Ovary (tissue), 10 donors: ENCODE measurements at regions of chr10 and their contacts with region 1.

Region 1: DNA sequence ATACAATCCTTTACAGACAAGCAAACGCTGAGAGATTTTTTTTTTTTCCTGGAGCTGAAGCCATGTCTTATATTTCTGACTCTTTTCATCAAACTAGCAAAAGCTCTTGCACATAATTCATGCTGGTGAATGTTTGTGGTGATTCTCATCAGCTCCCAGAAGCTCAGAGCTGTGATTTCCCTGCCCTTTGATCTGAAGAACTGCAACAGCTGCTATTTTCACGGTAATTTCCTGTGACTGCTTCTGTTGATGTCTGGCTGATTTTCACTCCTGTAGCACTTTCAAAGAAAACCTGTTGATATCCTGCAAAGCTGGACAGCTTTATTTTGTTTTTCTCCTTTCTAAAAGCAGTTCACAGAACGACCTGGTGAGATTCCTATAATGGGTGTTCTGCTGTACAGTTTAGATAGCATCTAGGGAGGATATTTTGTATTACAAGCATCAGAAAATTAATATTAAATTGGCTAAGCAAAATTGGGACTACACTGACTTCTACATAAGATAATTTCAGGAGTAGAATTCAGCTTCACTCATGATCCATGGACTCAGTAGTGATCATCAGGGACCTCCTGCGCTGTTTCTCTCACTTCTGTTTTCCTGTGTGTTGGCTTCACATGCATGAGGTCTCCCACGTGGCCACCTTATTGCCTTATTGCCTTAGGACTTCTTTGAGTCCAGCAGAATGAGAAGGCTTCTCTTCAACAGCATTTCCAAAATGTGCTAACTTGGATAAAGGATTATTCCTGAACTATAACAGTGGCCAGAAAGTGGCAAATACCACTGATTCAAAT is 1111.6 kb upstream of the SORCS1 start:
- DNase-seq: no peak
- H3K4me3 ChIP-seq: no peak overlapping the region
- H3K27ac ChIP-seq: no peak overlapping the region
- H3K4me1 ChIP-seq: no peaks in the 10 kb centered on the region
- H3K27me3 ChIP-seq: no peaks in the 10 kb centered on the region
- CTCF ChIP-seq: no peak
- EP300 ChIP-seq: no peak
- POLR2A ChIP-seq: no peak

Region 2: DNA sequence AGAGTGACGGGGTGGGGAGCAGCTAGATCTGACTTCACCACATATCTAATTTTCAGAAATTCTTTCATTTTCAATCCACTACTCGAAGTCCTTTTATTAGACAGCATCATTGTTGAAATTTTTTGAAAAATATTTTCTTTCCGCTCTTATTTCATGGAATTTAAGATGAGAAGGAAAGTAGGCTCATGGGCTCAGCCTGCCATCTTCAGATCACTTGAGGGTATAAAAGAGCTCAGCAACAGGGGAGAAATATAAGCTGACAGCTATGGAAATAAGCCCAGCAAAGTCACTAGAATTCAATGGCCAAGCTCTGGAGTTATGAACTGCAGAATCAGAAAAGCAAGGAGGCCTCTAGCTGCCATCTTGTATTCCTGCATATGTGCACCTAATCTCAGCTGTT is 1258.1 kb after region 1 on chr10:
- intact Hi-C with region 1: loop called in 1 of 4 experiments (anchors 10 kb)
- DNase-seq: no peak
- H3K4me3 ChIP-seq: no peak overlapping the region
- H3K27ac ChIP-seq: no peak overlapping the region
- H3K4me1 ChIP-seq: no peaks in the 10 kb centered on the region
- H3K27me3 ChIP-seq: no peaks in the 10 kb centered on the region
- CTCF ChIP-seq: no peak
- EP300 ChIP-seq: no peak
- POLR2A ChIP-seq: no peak